ENCODE measurements at regions of chr7 and their contacts with region 1.

Region 1: DNA sequence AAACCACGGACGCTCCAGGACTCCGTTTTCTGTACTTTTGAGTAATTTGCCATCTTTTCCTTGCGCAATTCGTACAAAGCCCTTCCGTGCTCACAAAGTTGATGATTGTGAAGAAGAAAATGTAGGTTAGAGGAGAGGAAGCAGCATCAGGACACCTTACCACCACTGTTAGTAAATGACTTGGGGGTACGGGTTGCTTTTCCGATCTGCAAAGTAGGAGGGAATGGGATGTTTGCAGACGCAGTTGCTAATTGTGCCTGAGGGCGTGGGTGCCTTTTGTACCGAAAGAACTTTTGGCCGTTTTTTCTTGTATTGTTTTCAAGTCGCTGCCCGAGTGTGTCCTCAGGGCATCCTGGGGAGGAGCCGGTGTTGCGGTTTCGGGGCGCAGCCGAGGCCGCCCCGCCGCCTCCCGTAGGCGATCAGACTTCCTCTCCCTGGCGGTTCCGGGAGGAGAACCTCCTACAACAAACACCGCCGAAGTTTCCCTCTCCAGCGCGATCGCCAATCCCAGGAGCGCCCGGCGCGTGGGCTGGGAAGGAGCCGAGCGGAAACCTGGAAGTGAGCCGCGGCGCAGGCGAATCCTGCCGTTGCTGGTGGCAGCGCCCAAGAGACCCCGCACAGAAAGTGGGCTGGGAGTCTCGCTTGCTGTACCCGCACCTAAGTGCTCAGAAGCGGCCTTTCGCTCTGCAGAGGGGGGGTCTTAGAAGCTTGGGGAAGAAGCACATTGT is 1.0 kb downstream of the PRR15 start:
- DNase-seq: peak; percentile 96 to 98
- H3K4me3 ChIP-seq: peak overlapping the region; percentile 72
- H3K27ac ChIP-seq: peak overlapping the region; percentile 92
- H3K4me1 ChIP-seq: peaks cover 52% of the 10 kb centered on the region
- H3K27me3 ChIP-seq: no peaks in the 10 kb centered on the region
- CTCF ChIP-seq: 0 out of 2 replicates have a peak, but pooled peaks have one; percentile 17

Region 2: DNA sequence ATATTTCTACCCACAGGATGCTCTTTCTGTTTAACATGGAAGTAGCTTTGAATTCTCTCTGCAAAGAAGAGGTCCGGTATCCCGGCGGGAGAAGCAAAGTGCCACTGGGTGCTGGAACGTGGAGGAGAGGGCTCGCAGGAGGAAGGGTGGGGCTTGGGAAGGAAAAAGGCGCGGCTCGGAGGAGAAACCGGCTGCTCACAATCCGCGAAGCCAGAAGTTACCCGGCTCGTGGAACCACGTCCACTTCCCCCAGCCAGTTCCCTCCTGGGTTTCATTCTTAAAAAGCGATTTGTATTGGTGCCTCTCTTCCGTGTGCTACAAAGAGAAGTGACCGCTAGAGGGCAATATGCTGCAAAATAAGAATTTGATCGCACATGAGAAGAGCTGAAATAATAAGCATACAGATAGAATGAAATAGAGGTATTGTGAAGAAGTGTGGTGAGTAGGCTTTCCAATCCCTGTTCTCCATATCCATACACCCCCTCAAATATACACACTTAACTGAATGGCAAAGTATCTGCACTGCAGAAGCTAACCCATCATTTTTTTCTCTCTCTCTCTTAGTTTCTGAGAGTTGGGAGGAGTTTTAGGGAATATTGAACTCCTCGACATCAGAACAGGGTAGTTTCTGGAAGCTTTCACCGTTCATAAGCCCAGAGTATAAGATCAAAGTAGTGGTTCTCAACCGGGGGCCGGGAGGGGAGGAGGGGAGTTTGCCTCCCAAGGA is 637.6 kb before region 1 on chr7:
- CTCF ChIA-PET with region 1: no interaction called
- POLR2A ChIA-PET with region 1: no interaction called
- intact Hi-C with region 1: loop called (anchors 2 kb)
- DNase-seq: peak; percentile 45 to 82
- H3K4me3 ChIP-seq: peak overlapping the region; percentile 54
- H3K27ac ChIP-seq: no peak overlapping the region
- H3K4me1 ChIP-seq: peaks cover 13% of the 10 kb centered on the region; the same call in 1 of the 2 replicates
- H3K27me3 ChIP-seq: no peaks in the 10 kb centered on the region
- CTCF ChIP-seq: peak; percentile 97

Region 3: GRCh38 chr7:29416276-29416937 is 148.3 kb before region 1 on chr7:
- CTCF ChIA-PET with region 1: no interaction called
- POLR2A ChIA-PET with region 1: no interaction called
- intact Hi-C with region 1: no loop called
- DNase-seq: no peak
- H3K4me3 ChIP-seq: no peak overlapping the region
- H3K27ac ChIP-seq: no peak overlapping the region
- H3K4me1 ChIP-seq: peaks cover 11% of the 10 kb centered on the region
- H3K27me3 ChIP-seq: no peaks in the 10 kb centered on the region
- CTCF ChIP-seq: no peak

Region 4: GRCh38 chr7:29457565-29458011 is 107.1 kb before region 1 on chr7:
- CTCF ChIA-PET with region 1: no interaction called
- POLR2A ChIA-PET with region 1: interaction called, 20 read pairs
- intact Hi-C with region 1: no loop called
- DNase-seq: no peak
- H3K4me3 ChIP-seq: no peak overlapping the region
- H3K27ac ChIP-seq: no peak overlapping the region
- H3K4me1 ChIP-seq: 0 out of 2 replicates have a peak, but pooled peaks cover 6% of the 10 kb centered on the region
- H3K27me3 ChIP-seq: no peaks in the 10 kb centered on the region; the same call in 1 of the 2 replicates
- CTCF ChIP-seq: no peak

Region 5: DNA sequence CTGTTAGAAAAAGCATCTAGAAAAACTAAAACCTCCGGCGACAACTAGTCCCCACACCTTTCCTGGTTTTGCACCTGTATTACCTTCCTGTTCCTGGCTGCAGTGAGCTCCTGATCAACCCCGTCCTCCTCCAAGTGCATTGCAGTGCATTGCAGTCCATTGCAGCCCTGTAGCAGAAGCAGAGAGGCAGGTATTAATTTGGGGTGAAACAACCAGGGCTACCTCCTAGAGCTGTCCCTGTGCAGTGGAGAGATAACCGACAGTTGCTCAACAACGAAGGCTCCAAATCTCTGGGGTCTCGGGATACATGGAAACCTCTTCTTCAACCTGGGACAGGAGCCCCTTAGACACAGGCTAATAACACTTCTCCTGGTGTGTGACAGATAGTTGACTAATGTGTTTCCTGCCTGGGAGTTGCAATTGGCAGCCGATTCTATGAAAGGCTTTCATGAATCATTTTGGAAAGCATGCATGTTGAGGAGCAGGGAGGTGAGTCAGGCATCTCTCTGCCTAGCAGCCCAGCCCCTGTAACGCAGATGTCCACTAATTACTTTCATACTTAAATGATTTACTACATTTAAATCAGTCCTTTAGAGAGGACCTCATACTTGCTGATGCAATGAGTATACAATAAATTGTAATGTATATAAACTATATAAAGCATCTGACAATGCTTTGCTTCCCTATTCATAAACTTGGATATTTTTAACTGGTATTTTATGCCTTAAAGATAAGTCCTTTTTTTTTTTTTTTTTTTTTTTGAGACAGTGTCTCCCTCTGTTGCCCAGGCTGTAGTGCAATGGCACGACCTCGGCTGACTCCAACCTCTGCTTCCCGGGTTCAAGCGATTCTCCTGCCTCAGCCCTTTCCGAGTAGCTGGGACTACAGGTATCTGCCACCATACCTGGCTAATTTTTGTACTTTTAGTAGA is 57.9 kb after region 1 on chr7:
- CTCF ChIA-PET with region 1: no interaction called
- POLR2A ChIA-PET with region 1: no interaction called
- intact Hi-C with region 1: loop called (anchors 1 kb)
- DNase-seq: peak; percentile 75 to 98
- H3K4me3 ChIP-seq: peak overlapping the region; percentile 24; the same call in 1 of the 2 replicates
- H3K27ac ChIP-seq: peak overlapping the region; percentile 91
- H3K4me1 ChIP-seq: peaks cover 49% of the 10 kb centered on the region
- H3K27me3 ChIP-seq: no peaks in the 10 kb centered on the region
- CTCF ChIP-seq: 0 out of 2 replicates have a peak, but pooled peaks have one; percentile 19

Region 6: DNA sequence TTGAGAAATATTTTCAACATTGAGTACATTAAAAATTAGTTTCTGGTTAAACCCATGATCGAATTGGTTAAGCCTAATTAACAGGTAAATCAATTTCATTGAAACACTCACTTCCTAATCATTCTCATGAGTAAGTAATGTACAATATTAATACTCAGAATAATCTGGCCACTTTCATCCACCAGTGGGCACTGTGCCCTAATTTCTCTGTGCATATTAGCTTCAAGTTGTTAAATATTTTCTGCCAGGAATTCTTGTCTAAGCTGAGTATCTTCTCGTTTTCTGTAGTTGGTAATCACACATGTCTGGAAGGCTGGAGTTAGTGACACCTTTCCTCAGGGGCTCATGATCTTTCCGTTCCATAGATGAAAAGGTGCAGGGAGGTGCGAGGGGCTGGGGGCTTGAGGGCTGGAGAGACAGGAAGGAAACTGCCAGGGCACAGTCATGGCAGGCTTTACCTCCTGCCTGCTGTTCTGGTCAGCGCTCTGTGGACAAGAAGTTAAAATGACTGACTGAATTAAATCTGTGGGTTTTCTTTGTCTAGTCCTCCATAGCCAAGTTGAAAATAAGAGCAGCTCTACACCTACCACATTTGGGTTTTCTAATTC is 313.5 kb after region 1 on chr7:
- CTCF ChIA-PET with region 1: no interaction called
- POLR2A ChIA-PET with region 1: no interaction called
- intact Hi-C with region 1: loop called (anchors 5 kb)
- DNase-seq: peak; percentile 50 to 59
- H3K4me3 ChIP-seq: no peak overlapping the region
- H3K27ac ChIP-seq: no peak overlapping the region
- H3K4me1 ChIP-seq: no peaks in the 10 kb centered on the region
- H3K27me3 ChIP-seq: no peaks in the 10 kb centered on the region
- CTCF ChIP-seq: peak; percentile 90